Activated T-helper 1 cell treated with anti-CD3 and anti-CD28 coated beads, Interleukin-12 subunit alpha, Interleukin-12 subunit beta, Interleukin-2, Interleukin-4 antibody, amounts not matched to agents 30 ng/mL and 10 ng/mL and 1 ng/mL, durations not matched to agents 14 hours and 24 hours and 36 hours (primary cell): ENCODE measurements at regions of chr22 and their contacts with region 1.

Region 1: DNA sequence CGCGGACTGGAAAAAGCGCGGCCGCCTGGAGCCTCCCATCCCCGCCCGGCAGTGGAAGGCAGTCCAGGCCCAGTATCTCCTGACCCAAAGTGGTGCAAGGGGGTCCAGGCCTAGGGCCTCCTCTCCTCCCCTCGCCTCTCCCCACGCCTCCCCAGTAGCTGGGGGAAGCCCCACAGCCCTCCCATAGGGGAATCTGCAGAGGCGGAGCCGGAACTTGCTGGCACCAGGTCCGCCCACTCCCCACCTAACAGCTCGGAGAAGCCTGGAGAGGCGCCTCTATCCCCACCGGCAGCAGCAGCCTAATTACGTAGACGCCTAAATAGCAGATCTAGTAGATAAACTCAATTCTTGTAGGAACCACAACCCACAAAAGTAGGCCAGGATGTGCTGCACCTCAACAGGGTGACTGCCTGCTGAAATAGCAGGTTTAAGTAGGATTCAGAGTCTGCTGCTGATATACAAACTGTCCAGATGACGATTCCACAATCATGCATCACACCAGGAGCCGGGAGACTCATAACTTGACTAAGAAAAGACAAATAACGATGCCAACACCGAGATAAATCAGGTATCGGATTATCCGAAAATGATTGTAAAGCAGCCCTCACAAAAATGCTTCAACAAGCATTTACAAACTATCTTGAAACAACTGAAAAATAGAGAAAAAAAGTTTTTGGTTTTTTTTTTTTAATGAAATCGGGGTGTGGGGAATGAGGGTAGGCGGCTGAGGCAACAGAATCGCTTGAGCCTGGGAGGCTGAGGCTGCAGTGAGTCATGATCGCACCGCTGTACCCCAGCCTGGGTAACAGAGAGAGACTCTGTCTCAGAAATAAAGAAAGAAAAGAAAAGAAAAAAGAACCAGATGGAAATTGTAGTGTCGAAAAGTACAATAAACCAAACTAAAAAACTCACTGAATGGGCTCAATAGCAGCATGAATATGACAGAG is 11.4 kb upstream of the BRD1 start:
- DNase-seq: peak; percentile 85
- H3K4me3 Mint-ChIP-seq: peak overlapping the region; percentile 68
- H3K27ac Mint-ChIP-seq: peak overlapping the region; percentile 87
- H3K4me1 Mint-ChIP-seq: peaks cover 28% of the 10 kb centered on the region
- H3K27me3 Mint-ChIP-seq: peaks cover 4% of the 10 kb centered on the region

Region 2: GRCh38 chr22:49852898-49853894 is 14.2 kb after region 1 on chr22 and contains the start of gene ZBED4:
- intact Hi-C with region 1: loop called (anchors 1 kb)
- DNase-seq: peak; percentile 99
- H3K4me3 Mint-ChIP-seq: peak within 1 kb of the TSS; percentile 98
- H3K27ac Mint-ChIP-seq: peak within 1 kb of the TSS; percentile 97
- H3K4me1 Mint-ChIP-seq: peaks cover 32% of the 10 kb centered on the region
- H3K27me3 Mint-ChIP-seq: peaks cover 10% of the 10 kb centered on the region
- total RNA-seq, gene ZBED4: 19.4 and 20.9 TPM in 2 replicates

Region 3: DNA sequence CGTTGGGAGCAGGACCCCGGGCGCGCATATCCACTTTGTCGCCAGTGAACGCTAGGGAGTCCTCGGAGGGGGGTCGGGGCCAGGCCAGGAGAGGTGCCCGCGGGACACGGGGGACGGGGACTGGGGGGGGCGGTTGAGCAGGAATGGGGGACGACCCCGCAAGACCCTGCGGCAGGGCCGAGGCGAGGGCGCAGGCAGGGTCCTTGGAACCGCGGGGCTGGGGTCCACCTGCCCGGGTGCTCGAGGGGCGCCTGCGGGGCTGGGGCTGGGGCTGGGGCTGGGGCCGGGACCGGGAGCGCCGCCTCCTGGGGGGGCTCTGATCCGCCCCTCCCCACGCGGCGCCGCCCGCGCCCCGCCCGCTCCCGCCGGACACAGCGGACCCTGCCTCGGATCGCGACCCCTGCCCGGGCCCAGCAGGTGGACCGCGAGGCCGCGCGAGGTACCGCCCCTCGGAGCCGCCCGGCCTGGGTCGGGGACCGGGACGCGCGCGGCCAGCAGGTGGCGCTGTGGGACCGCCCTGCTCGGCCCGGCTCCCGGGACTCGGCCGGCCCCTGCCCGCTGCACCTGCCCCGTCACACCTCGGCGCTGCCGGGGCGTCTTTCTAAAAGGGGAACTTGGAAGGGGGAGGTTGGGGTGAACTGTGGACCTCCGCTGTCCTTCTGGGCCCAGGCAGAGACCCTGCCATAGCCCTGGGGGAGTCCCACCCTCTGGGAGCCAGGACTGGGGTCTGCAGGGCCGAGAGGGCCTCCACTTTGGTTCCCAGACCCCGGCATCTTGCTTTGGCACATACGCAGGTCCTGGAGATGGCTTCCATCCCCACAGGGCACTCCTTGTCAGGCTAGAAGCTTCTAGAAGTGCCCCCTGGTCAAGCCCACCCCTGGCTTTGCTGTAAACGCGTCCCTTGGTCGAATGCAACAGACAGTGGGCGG is 90.4 kb after region 1 on chr22:
- intact Hi-C with region 1: no loop called
- DNase-seq: peak; percentile 75
- H3K4me3 Mint-ChIP-seq: no peak overlapping the region
- H3K27ac Mint-ChIP-seq: no peak overlapping the region
- H3K4me1 Mint-ChIP-seq: peaks cover 32% of the 10 kb centered on the region
- H3K27me3 Mint-ChIP-seq: no peaks in the 10 kb centered on the region